ENCODE measurements at regions of chr22 and their contacts with region 1.

Region 1: DNA sequence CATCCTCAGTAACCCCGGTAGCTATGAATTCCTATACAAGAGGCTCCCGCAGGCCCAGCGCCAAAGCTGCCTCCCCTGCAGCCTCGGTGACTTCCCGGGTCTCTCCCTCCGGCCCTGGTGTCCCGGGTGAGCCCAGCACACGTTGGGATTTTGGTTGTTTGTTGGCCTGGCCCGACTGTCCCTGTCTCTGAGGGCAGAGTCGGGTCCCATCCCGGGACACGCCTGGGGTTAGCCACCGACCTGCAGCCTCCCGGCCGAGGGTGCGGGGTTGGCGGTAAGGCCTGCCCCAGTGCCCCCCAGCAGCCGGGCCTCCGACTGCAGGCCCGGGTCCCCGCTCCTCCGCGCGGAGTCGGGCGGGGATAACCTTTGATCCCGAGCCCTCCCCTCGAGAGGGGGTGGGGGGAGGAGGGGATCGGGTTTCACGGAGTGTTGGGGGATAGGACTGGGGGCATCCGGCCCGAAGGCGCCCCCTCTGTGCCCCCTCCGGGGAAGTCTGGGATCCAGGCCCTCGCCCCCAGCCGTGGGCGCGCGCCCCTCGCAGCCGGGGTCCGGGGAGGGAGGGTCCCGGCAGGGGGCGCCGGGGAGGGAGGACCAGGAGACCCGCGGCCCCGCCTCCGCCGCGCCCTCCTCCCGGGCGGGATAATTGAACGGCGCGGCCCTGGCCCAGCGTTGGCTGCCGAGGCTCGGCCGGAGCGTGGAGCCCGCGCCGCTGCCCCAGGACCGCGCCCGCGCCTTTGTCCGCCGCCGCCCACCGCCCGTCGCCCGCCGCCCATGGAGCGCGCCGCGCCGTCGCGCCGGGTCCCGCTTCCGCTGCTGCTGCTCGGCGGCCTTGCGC is at the start of gene FBLN1:
- DNase-seq: no peak
- ATAC-seq: peak; percentile 74
- H3K4me3 ChIP-seq: peak within 1 kb of the TSS; percentile 80
- H3K27ac ChIP-seq: peak within 1 kb of the TSS; percentile 90
- H3K4me1 ChIP-seq: peaks cover 28% of the 10 kb centered on the region
- H3K27me3 ChIP-seq: no peaks in the 10 kb centered on the region
- CTCF ChIP-seq: peak; percentile 21; the same call in 1 of the 2 replicates
- POLR2A ChIP-seq: no peak
- RAD21 ChIP-seq: no peak
- total RNA-seq, gene FBLN1: 11.3 and 11.4 TPM in 2 replicates

Region 2: DNA sequence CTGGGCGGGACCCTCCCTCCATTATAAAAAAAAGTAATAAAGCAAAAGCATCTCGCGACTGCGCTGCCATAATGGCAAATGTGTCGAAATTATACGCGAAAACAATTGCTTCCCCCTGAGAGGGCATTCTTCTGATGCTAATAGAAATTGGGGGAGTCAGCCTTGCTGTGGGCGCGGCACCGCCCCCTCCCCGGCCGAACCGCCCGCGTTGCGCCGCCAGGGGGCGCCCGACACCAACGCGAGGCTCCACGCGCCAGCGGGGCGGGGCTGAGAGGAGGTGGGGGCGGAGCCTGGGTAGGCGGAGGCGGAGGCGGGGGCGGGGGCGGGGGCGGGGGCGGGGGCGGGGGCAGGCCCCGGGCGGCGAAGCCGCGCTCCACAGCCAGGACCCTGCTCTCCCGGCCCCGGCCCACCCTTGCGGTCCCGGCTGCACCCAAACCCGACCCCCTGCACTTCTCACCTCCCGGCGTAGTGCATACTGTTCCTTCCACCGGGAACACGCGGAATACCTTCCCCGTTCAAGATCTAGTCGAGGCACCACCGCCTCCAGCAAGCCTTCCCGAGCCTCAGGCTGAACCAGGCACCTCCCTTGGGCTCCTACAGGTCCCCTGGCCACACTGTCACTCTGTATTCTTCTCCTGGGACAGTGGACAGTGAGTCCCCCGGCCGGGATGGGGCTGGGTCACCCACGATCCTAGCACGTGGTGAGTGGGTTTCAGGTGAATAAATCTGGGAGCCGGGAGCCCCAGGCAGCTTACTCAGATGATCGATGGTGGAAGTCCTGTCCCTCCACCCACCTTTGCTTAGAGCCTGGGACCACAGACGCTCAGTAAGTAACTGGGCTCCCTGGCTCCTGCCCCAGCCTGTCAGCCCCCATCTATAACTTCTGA is 233.2 kb before region 1 on chr22:
- CTCF ChIA-PET with region 1: no interaction called
- POLR2A ChIA-PET with region 1: no interaction called
- dilution Hi-C with region 1: no loop called
- in situ Hi-C with region 1: no loop called
- intact Hi-C with region 1: loop called (anchors 2 kb)
- DNase-seq: peak; percentile 53
- ATAC-seq: peak; percentile 96
- H3K4me3 ChIP-seq: peak overlapping the region; percentile 86
- H3K27ac ChIP-seq: peak overlapping the region; percentile 54
- H3K4me1 ChIP-seq: peaks cover 9% of the 10 kb centered on the region
- H3K27me3 ChIP-seq: peaks cover 8% of the 10 kb centered on the region
- CTCF ChIP-seq: peak; percentile 90
- POLR2A ChIP-seq: no peak
- RAD21 ChIP-seq: peak; percentile 93

Region 3: GRCh38 chr22:45413368-45414211 is 88.8 kb before region 1 on chr22 and contains the starts of genes RIBC2 and SMC1B:
- CTCF ChIA-PET with region 1: no interaction called
- POLR2A ChIA-PET with region 1: interaction called, 10 read pairs
- dilution Hi-C with region 1: no loop called
- in situ Hi-C with region 1: no loop called
- intact Hi-C with region 1: no loop called
- DNase-seq: peak; percentile 57
- ATAC-seq: peak; percentile 74
- H3K4me3 ChIP-seq: peak within 1 kb of the TSS; percentile 66
- H3K27ac ChIP-seq: no peak within 1 kb of the TSS; the same call in 1 of the 2 replicates
- H3K4me1 ChIP-seq: peaks cover 2% of the 10 kb centered on the region
- H3K27me3 ChIP-seq: peaks cover 2% of the 10 kb centered on the region
- CTCF ChIP-seq: no peak
- POLR2A ChIP-seq: no peak
- RAD21 ChIP-seq: no peak
- total RNA-seq, gene RIBC2: 0.28 and 0.36 TPM in 2 replicates
- total RNA-seq, gene SMC1B: not detected in 2 replicates

Region 4: DNA sequence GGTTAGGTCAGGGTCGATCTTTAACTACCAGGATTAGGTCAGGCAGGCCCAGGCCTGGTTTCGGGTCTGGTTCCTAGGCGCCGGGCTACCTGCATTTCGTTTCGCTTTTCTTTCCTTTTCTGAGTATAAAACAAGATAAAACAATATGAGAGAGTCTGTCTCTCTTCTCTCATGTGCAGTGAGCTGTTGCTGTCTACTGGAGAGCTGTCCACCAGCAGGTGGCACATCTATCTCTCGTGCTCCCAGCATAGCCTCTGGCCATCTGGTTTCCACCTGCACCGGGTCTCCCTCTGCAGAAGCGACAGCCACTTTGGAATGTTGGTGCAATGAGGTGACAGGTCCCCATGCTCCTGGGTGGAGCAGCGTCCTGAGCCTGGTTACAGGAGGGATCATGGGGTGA is 61.3 kb before region 1 on chr22:
- CTCF ChIA-PET with region 1: interaction called, 3 read pairs
- POLR2A ChIA-PET with region 1: no interaction called
- dilution Hi-C with region 1: no loop called
- in situ Hi-C with region 1: no loop called
- intact Hi-C with region 1: loop called (anchors 2 kb)
- DNase-seq: peak; percentile 68
- ATAC-seq: peak; percentile 75
- H3K4me3 ChIP-seq: no peak overlapping the region
- H3K27ac ChIP-seq: no peak overlapping the region
- H3K4me1 ChIP-seq: peaks cover 20% of the 10 kb centered on the region
- H3K27me3 ChIP-seq: no peaks in the 10 kb centered on the region
- CTCF ChIP-seq: peak; percentile 73
- POLR2A ChIP-seq: no peak
- RAD21 ChIP-seq: peak; percentile 84

Region 5: GRCh38 chr22:45450921-45451651 is 51.3 kb before region 1 on chr22:
- CTCF ChIA-PET with region 1: no interaction called
- POLR2A ChIA-PET with region 1: interaction called, 4 read pairs
- dilution Hi-C with region 1: no loop called
- in situ Hi-C with region 1: loop called (anchors 5 kb)
- intact Hi-C with region 1: no loop called
- DNase-seq: peak; percentile 97
- ATAC-seq: peak; percentile 79
- H3K4me3 ChIP-seq: no peak overlapping the region
- H3K27ac ChIP-seq: peak overlapping the region; percentile 100
- H3K4me1 ChIP-seq: peaks cover 37% of the 10 kb centered on the region
- H3K27me3 ChIP-seq: no peaks in the 10 kb centered on the region
- CTCF ChIP-seq: no peak
- POLR2A ChIP-seq: no peak
- RAD21 ChIP-seq: no peak